GM12878 (cell line): ENCODE measurements at regions of chr9 and their contacts with region 1.

Region 1: GRCh38 chr9:133955821-133956411 is 36.2 kb downstream of the VAV2 start:
- DNase-seq: no peak
- ATAC-seq: peak; percentile 59
- H3K4me3 ChIP-seq: peak overlapping the region; percentile 67
- H3K27ac ChIP-seq: peak overlapping the region; percentile 99
- H3K4me1 ChIP-seq: peaks cover 57% of the 10 kb centered on the region
- H3K27me3 ChIP-seq: no peaks in the 10 kb centered on the region
- CTCF ChIP-seq: peak in 1 of 3 experiments; percentile 12; a peak in 1 of 6 replicates
- EP300 ChIP-seq: no peak
- POLR2A ChIP-seq: peak; percentile 83
- RAD21 ChIP-seq: no peak

Region 2: DNA sequence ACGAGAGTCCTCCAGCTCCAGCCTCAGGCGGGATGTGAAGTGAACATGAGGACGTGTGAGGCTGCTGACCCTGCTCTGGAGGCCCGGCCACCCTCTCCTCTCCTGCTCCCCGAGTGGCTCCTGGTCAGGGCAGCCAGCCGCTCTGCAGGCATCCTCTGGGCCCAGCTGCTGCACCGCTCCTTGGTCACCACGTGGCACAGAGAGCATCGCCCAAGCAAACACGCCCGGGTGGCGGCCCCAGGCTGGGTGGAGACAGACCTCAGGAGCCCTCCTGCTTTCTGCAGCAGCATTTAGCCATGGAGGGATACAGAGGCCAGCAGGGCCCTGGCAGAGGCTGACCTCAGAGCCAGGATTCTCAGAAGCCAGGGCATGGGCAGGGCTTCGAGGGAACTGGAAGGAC is 148.1 kb before region 1 on chr9:
- CTCF ChIA-PET with region 1: no interaction called
- POLR2A ChIA-PET with region 1: no interaction called
- RAD21 ChIA-PET with region 1: no interaction called
- SMC1A ChIA-PET with region 1: no interaction called
- in situ Hi-C with region 1: no loop called
- intact Hi-C with region 1: no loop called
- DNase-seq: no peak
- ATAC-seq: no peak
- H3K4me3 ChIP-seq: no peak overlapping the region
- H3K27ac ChIP-seq: no peak overlapping the region
- H3K4me1 ChIP-seq: no peaks in the 10 kb centered on the region
- H3K27me3 ChIP-seq: no peaks in the 10 kb centered on the region
- CTCF ChIP-seq: no peak
- EP300 ChIP-seq: no peak
- POLR2A ChIP-seq: no peak
- RAD21 ChIP-seq: no peak

Region 3: DNA sequence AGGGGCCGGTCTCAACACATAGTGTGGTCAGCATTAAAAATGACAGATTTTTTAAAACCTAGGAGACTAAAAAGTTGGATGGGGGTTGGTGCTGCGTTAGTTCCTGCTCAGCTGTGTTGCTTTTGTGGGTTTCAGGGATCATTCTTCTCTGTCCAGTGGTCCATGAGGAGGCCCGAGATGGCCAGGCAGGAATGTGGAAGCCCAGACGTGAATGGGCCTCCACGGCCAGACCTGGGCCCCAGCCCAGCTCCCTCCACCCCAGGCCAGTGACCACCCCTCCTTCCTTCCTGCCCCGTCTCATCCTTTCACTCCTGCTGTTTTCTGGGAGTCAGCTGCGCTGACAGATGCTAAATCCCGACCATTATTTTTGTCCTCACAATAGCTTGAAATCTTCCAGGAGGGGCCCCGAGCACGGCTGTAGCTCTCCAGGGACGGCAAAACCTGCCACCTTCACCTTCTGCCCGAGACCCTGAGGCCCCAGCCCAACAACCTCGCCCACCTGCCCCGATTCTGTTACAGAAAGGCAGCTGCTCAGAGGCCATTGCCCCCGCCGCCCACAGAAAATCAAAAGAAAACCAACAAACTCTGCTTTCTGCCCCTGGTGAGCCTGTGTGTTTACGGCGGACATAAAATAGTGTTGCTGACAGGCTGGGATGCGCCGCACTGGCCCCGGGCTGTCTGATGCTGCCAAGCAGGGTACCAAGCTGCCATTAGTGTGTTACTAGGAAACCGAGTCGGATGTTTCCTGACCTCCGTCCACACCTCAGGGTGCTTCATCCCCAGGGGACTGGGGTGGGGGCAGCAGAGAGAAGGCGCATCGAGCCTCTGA is 134.1 kb before region 1 on chr9:
- CTCF ChIA-PET with region 1: interaction called, 3 read pairs
- POLR2A ChIA-PET with region 1: interaction called, 5 read pairs
- RAD21 ChIA-PET with region 1: interaction called, 4 read pairs
- SMC1A ChIA-PET with region 1: no interaction called
- in situ Hi-C with region 1: no loop called
- intact Hi-C with region 1: loop called (anchors 2 kb)
- DNase-seq: no peak
- ATAC-seq: peak; percentile 47
- H3K4me3 ChIP-seq: 0 out of 2 replicates have a peak overlapping the region, but pooled peaks have one; percentile 5
- H3K27ac ChIP-seq: peak overlapping the region; percentile 77
- H3K4me1 ChIP-seq: peaks cover 37% of the 10 kb centered on the region
- H3K27me3 ChIP-seq: no peaks in the 10 kb centered on the region
- CTCF ChIP-seq: no peak
- EP300 ChIP-seq: no peak
- POLR2A ChIP-seq: 0 out of 2 replicates have a peak, but pooled peaks have one; percentile 40
- RAD21 ChIP-seq: no peak

Region 4: GRCh38 chr9:133839822-133840329 is 116.0 kb before region 1 on chr9:
- CTCF ChIA-PET with region 1: no interaction called
- POLR2A ChIA-PET with region 1: no interaction called
- RAD21 ChIA-PET with region 1: no interaction called
- SMC1A ChIA-PET with region 1: no interaction called
- in situ Hi-C with region 1: no loop called
- intact Hi-C with region 1: no loop called
- DNase-seq: no peak
- ATAC-seq: no peak
- H3K4me3 ChIP-seq: no peak overlapping the region
- H3K27ac ChIP-seq: no peak overlapping the region
- H3K4me1 ChIP-seq: no peaks in the 10 kb centered on the region; the same call in 1 of the 2 replicates
- H3K27me3 ChIP-seq: no peaks in the 10 kb centered on the region
- CTCF ChIP-seq: no peak
- EP300 ChIP-seq: no peak
- POLR2A ChIP-seq: no peak
- RAD21 ChIP-seq: no peak

Region 5: DNA sequence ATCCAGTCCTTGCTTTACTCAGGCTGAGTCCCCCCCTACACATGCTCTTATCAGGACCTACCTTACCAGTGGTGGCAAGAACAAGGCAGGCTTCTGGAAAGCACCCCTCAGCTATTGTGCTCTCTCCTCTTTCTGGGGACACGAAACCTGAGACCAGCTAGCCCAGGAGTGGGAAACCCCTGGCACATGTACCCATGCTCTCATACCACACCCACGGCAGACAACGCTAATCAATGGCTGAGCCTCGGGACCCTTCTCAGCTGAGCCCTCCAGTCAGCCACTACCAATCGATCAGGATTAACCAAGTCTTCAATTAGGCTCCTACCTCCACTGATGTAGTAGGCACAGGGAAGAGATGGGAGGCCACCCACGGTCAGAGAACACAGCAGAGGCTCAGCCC is 28.9 kb before region 1 on chr9:
- CTCF ChIA-PET with region 1: no interaction called
- POLR2A ChIA-PET with region 1: interaction called, 14 read pairs
- RAD21 ChIA-PET with region 1: no interaction called
- SMC1A ChIA-PET with region 1: interaction called, 3 read pairs
- in situ Hi-C with region 1: no loop called
- intact Hi-C with region 1: no loop called
- DNase-seq: peak; percentile 49
- ATAC-seq: peak; percentile 95
- H3K4me3 ChIP-seq: no peak overlapping the region
- H3K27ac ChIP-seq: peak overlapping the region; percentile 29
- H3K4me1 ChIP-seq: peaks cover 11% of the 10 kb centered on the region
- H3K27me3 ChIP-seq: no peaks in the 10 kb centered on the region
- CTCF ChIP-seq: no peak
- EP300 ChIP-seq: no peak
- POLR2A ChIP-seq: no peak
- RAD21 ChIP-seq: no peak

Region 6: GRCh38 chr9:133945314-133945975 is 10.5 kb before region 1 on chr9:
- CTCF ChIA-PET with region 1: interaction called, 34 read pairs
- POLR2A ChIA-PET with region 1: interaction called, 54 read pairs
- RAD21 ChIA-PET with region 1: interaction called, 66 read pairs
- SMC1A ChIA-PET with region 1: interaction called, 58 read pairs
- in situ Hi-C with region 1: no loop called
- intact Hi-C with region 1: loop called (anchors 1 kb)
- DNase-seq: peak; percentile 89
- ATAC-seq: peak; percentile 87
- H3K4me3 ChIP-seq: peak overlapping the region; percentile 35; the same call in 1 of the 2 replicates
- H3K27ac ChIP-seq: peak overlapping the region; percentile 89
- H3K4me1 ChIP-seq: peaks cover 32% of the 10 kb centered on the region
- H3K27me3 ChIP-seq: no peaks in the 10 kb centered on the region
- CTCF ChIP-seq: no peak
- EP300 ChIP-seq: peak; percentile 73 to 85; a peak in 3 of 4 replicates
- POLR2A ChIP-seq: no peak
- RAD21 ChIP-seq: no peak

Region 7: DNA sequence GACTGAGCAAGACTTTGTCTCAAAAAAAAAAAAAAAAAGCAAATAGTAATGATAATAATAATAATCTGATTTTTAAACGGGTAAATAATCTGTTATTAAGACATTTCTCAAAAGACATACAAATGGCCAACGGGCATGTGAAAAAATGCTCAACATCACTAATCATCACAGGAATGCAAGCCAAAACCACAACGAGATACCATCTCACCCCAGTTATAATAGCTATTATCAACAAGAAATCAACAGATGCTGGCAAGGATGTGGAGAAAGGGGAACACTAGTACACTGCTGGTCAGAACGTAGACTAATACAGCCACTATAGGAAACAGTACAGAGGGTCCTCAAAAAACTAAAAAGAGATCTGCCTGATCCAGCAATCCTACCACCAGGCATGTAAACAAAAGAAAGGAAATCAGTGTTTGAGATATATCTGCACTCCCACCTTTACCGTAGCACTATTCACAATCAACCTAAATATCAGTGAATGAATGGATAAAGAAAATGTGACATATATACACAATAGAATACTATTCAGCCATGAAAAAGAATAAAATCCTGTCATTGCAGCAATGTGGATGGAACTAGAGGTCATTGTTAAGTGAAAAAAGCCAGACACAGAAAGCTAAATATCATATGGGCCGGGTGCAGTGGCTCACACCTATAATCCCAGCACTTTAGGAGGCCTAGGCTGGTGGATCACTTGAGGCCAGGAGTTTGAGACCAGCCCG is 11.3 kb after region 1 on chr9:
- CTCF ChIA-PET with region 1: interaction called, 5 read pairs
- POLR2A ChIA-PET with region 1: interaction called, 31 read pairs
- RAD21 ChIA-PET with region 1: interaction called, 15 read pairs
- SMC1A ChIA-PET with region 1: interaction called, 15 read pairs
- in situ Hi-C with region 1: no loop called
- intact Hi-C with region 1: no loop called
- DNase-seq: no peak
- ATAC-seq: no peak
- H3K4me3 ChIP-seq: no peak overlapping the region
- H3K27ac ChIP-seq: no peak overlapping the region
- H3K4me1 ChIP-seq: peaks cover 30% of the 10 kb centered on the region
- H3K27me3 ChIP-seq: no peaks in the 10 kb centered on the region
- CTCF ChIP-seq: no peak
- EP300 ChIP-seq: no peak
- POLR2A ChIP-seq: no peak
- RAD21 ChIP-seq: no peak

Region 8: GRCh38 chr9:133979273-133979920 is 23.5 kb after region 1 on chr9:
- CTCF ChIA-PET with region 1: no interaction called
- POLR2A ChIA-PET with region 1: interaction called, 5 read pairs
- RAD21 ChIA-PET with region 1: interaction called, 11 read pairs
- SMC1A ChIA-PET with region 1: no interaction called
- in situ Hi-C with region 1: no loop called
- intact Hi-C with region 1: no loop called
- DNase-seq: no peak
- ATAC-seq: peak; percentile 74
- H3K4me3 ChIP-seq: peak overlapping the region; percentile 20; the same call in 1 of the 2 replicates
- H3K27ac ChIP-seq: peak overlapping the region; percentile 48
- H3K4me1 ChIP-seq: peaks cover 18% of the 10 kb centered on the region
- H3K27me3 ChIP-seq: no peaks in the 10 kb centered on the region
- CTCF ChIP-seq: no peak
- EP300 ChIP-seq: no peak
- POLR2A ChIP-seq: no peak
- RAD21 ChIP-seq: no peak